HAP-1 (cell line): ENCODE measurements at regions of chr2 and their contacts with region 1.

Region 1: GRCh38 chr2:174697255-174697654 is 67.0 kb downstream of the CHRNA1 start:
- DNase-seq: peak; percentile 65 to 82
- H3K4me3 ChIP-seq: no peak overlapping the region
- H3K4me1 ChIP-seq: no peaks in the 10 kb centered on the region
- H3K27me3 ChIP-seq: peaks cover 8% of the 10 kb centered on the region; the same call in 1 of the 2 replicates

Region 2: GRCh38 chr2:174465327-174465726 is 231.9 kb before region 1 on chr2:
- in situ Hi-C with region 1: loop called (anchors 10 kb)
- DNase-seq: peak in 1 of 2 experiments; percentile 16
- H3K4me3 ChIP-seq: no peak overlapping the region
- H3K4me1 ChIP-seq: no peaks in the 10 kb centered on the region
- H3K27me3 ChIP-seq: no peaks in the 10 kb centered on the region